ENCODE measurements at regions of chr17 and their contacts with region 1.

Region 1: GRCh38 chr17:4565209-4566141 is 5.1 kb upstream of the GGT6 start:
- DNase-seq: peak; percentile 75
- ATAC-seq: peak; percentile 79
- H3K4me3 Mint-ChIP-seq: peak overlapping the region; percentile 40
- H3K27ac Mint-ChIP-seq: no peak overlapping the region
- H3K4me1 Mint-ChIP-seq: peaks cover 37% of the 10 kb centered on the region
- H3K27me3 Mint-ChIP-seq: peaks cover 4% of the 10 kb centered on the region

Region 2: GRCh38 chr17:4474093-4474492 is 91.4 kb before region 1 on chr17:
- CTCF ChIA-PET with region 1: no interaction called
- DNase-seq: no peak
- ATAC-seq: no peak
- H3K4me3 Mint-ChIP-seq: no peak overlapping the region
- H3K27ac Mint-ChIP-seq: no peak overlapping the region
- H3K4me1 Mint-ChIP-seq: no peaks in the 10 kb centered on the region
- H3K27me3 Mint-ChIP-seq: no peaks in the 10 kb centered on the region

Region 3: GRCh38 chr17:4487823-4488718 is 77.4 kb before region 1 on chr17:
- CTCF ChIA-PET with region 1: no interaction called
- DNase-seq: no peak
- ATAC-seq: no peak
- H3K4me3 Mint-ChIP-seq: no peak overlapping the region
- H3K27ac Mint-ChIP-seq: no peak overlapping the region
- H3K4me1 Mint-ChIP-seq: peaks cover 35% of the 10 kb centered on the region
- H3K27me3 Mint-ChIP-seq: no peaks in the 10 kb centered on the region

Region 4: GRCh38 chr17:4554997-4555799 is 10.3 kb before region 1 on chr17 and contains the start of gene MYBBP1A:
- CTCF ChIA-PET with region 1: interaction called, 39 read pairs
- DNase-seq: peak; percentile 98
- ATAC-seq: peak; percentile 96
- H3K4me3 Mint-ChIP-seq: peak within 1 kb of the TSS; percentile 87
- H3K27ac Mint-ChIP-seq: peak within 1 kb of the TSS; percentile 94
- H3K4me1 Mint-ChIP-seq: peaks cover 27% of the 10 kb centered on the region
- H3K27me3 Mint-ChIP-seq: no peaks in the 10 kb centered on the region
- total RNA-seq, gene MYBBP1A: 72.4 to 94.3 TPM

Region 5: GRCh38 chr17:4625181-4625617 is 59.7 kb after region 1 on chr17:
- CTCF ChIA-PET with region 1: interaction called, 53 read pairs
- DNase-seq: no peak
- ATAC-seq: no peak
- H3K4me3 Mint-ChIP-seq: no peak overlapping the region
- H3K27ac Mint-ChIP-seq: no peak overlapping the region
- H3K4me1 Mint-ChIP-seq: peaks cover 2% of the 10 kb centered on the region
- H3K27me3 Mint-ChIP-seq: peaks cover 34% of the 10 kb centered on the region

Region 6: DNA sequence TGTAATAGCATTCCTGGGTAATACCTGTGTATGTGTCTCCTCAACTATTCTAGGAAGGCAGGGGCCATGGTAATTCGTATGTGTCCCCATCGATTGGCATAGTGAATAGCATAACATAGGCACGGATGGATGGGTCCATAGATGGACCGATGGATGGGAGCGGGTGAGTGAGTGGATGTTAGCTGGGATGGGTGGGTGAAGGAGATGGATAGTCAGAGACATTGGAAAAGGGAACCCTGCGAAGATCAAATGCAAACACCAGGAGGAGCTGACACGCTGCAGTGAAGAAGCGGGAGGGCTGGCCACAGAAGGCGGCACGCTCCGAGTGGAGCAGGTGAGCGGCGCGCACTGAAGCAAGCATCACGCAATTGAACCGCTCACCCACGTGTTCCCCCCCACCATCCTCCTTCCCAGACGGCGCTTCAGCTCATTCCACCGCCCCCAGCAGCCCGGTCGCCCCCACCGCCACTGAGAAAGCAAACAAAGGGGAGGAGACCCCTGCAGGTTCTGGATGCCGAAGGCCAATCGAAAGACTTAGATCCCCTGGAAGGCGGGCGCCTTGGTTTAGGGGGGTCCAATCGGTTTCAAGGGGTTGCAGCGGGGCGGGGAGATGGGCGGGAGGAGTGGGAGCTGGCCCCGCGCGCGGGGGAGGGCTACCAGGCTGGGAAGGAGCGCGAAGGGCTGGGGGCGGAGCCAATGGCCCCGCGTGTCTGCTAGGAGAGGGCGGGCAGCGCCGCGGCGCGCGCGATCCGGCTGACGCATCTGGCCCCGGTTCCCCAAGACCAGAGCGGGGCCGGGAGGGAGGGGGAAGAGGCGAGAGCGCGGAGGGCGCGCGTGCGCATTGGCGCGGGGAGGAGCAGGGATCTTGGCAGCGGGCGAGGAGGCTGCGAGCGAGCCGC is 144.6 kb after region 1 on chr17 and contains the start of gene ARRB2:
- CTCF ChIA-PET with region 1: no interaction called
- DNase-seq: peak; percentile 99
- ATAC-seq: peak; percentile 85
- H3K4me3 Mint-ChIP-seq: peak within 1 kb of the TSS; percentile 95
- H3K27ac Mint-ChIP-seq: peak within 1 kb of the TSS; percentile 97
- H3K4me1 Mint-ChIP-seq: peaks cover 61% of the 10 kb centered on the region
- H3K27me3 Mint-ChIP-seq: no peaks in the 10 kb centered on the region
- total RNA-seq, gene ARRB2: 348 to 365 TPM

Measured in activated CD8-positive, alpha-beta memory T cell treated with anti-CD3 and anti-CD28 coated beads, Interleukin-2, amount 10 ng/mL, durations not matched to agents 7 days and 5 days (primary cell).